Activated T-helper 2 cell treated with anti-CD3 and anti-CD28 coated beads, Interferon-gamma antibody, Interleukin-2, Interleukin-4, amounts not matched to agents 10 μg/mL and 5 μg/mL and 100 μg/mL, durations not matched to agents 14 hours and 24 hours and 36 hours (primary cell): ENCODE measurements at regions of chrX and their contacts with region 1.

Region 1: DNA sequence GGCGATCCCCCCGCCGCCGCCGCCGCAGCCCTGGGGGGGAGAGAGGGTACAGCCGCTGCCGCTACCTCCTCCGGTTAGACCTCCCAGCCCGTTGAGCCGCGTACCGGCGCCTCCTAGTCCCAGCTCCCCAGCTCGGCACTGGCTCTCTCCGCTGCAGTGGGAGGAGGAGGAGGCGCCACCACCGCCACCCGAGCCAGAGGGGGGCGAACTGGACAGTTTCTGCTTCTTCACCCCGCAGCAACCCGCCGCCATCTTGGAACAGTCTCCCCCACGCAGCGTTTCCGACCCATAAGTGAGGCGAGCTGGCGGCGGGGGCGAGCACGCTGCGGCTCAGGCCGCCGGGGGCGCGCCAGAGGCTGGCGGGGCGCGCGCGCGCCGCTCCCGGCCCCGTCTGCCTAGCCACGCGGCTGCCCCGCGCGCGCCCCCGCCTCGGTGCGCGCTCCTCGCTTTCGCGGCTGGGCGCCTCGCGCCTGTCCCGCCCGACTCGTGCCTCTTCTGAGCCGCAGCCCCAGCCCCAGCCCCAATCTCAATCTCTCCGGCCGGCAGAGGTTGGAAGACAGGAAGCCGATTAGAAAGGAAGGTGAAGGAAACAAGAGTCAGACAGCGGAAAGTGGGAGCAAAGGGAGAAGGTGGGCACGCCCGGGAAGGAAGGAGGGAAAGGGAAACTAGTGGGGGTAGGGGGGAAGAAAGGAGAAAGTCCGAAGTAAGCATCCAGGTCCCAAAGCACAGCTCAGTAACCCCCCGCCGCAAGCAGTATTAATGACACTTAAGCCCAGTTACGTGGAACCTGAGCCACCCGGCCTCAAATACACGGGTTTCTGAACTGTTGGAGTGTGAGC is at the start of gene AMMECR1:
- DNase-seq: peak; percentile 71
- H3K4me3 Mint-ChIP-seq: peak within 1 kb of the TSS; percentile 86
- H3K27ac Mint-ChIP-seq: peak within 1 kb of the TSS; percentile 83
- H3K4me1 Mint-ChIP-seq: peaks cover 14% of the 10 kb centered on the region
- H3K27me3 Mint-ChIP-seq: peaks cover 4% of the 10 kb centered on the region
- total RNA-seq, gene AMMECR1: 10.6 and 12.3 TPM in 2 replicates

Region 2: DNA sequence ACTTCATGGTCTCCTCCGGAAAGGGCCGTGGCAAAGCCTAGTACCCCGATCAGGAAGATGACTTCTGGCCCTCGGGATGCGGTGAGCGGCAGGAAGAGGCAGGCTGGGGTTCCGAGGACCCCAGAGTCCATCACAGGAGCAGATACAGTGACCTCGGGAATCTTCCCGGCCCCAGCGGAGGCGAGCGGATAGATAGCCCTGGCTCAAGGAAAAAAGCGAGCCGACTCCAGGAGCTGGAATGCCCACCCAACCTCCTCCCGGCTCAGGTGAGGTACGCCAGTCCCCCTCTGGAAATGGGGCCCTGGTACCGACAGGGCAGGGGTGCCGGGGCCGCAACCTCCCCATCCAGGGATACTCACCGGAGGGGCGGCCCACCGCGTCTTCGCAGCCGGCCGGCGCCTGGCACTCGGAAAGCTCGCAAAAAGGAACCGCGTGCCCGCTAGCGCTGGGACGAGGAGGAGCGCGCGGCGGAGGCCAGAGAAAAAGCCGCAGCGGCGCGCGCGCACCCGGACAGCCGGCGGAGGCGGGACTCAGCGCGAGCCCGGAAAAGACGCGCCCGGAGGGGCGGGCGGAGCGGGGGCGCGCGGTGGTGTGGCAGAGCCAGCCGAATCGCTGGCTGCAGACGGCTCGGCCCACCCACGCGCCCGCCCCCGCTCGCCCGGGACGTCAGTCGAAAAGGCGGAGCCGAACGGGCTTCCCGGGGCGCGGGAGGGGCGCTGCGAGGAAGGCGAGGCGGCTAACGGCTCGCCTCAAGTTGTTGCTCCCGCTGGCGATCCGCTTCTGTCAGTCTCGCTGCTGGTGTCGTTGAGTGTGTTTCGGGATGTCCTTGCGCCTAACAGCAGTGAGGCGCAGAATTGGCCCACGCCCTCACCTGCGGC is 585.0 kb before region 1 on chrX and contains the start of gene ACSL4:
- intact Hi-C with region 1: loop called (anchors 10 kb)
- DNase-seq: peak; percentile 78
- H3K4me3 Mint-ChIP-seq: peak within 1 kb of the TSS; percentile 93
- H3K27ac Mint-ChIP-seq: peak within 1 kb of the TSS; percentile 95
- H3K4me1 Mint-ChIP-seq: peaks cover 29% of the 10 kb centered on the region
- H3K27me3 Mint-ChIP-seq: no peaks in the 10 kb centered on the region
- total RNA-seq, gene ACSL4: 101 and 102 TPM in 2 replicates

Region 3: DNA sequence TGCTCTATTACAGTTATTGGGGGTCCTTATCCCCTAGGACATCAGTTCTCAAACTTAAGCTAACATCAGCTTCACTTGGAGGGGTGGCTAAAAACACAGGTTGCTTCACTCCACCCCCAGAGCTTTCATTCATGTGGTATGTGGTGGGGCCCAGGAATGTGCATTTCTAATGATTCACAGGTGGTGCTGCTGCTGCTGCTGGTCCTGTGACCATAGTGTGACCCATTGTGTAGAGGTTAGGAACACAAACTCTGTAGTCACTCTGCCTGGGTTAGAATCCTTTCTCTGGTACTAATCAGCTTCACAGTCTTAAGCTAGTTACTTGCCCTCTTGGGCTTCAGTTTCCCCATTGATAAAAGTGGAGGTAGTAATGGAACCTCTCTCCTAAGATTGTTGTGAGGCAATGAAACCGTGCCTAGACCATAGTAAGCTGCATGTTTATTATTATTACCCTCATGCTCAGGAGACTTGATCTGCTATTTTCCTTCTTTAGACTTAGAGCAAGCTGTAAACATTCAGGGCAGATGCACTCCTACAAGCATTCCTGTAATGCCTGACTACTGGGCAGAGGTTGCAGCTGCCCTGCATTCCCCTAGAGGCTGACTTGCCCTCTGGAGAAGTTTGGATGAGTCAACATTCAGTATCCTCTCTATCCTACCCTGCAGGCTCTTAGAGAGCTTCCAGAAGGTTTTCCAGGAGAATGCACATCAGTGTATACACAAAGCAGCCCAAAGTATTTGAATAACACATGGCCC is 490.9 kb before region 1 on chrX:
- intact Hi-C with region 1: no loop called
- DNase-seq: no peak
- H3K4me3 Mint-ChIP-seq: no peak overlapping the region
- H3K27ac Mint-ChIP-seq: no peak overlapping the region
- H3K4me1 Mint-ChIP-seq: peaks cover 9% of the 10 kb centered on the region
- H3K27me3 Mint-ChIP-seq: no peaks in the 10 kb centered on the region

Region 4: DNA sequence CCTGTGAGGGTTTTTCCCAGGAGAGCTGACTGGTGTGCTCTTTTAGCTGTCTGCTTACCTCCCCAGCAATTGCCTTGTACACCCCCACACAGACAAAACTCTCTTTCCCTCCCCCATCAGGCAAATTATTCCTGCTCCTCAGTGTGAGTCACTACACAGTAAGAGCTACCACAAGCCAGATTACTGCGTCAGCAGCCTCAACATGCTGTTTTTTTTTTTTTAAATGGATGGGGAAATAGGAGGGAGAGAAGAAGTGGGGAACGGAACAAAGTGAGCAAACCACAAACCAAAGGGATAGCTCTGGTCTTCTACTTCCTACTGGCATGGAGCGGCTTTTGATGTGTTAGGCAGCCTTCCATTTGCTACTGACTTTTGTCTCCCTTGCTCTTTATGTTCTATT is 477.5 kb before region 1 on chrX:
- intact Hi-C with region 1: loop called (anchors 10 kb)
- DNase-seq: no peak
- H3K4me3 Mint-ChIP-seq: no peak overlapping the region
- H3K27ac Mint-ChIP-seq: no peak overlapping the region
- H3K4me1 Mint-ChIP-seq: peaks cover 26% of the 10 kb centered on the region
- H3K27me3 Mint-ChIP-seq: no peaks in the 10 kb centered on the region

Region 5: DNA sequence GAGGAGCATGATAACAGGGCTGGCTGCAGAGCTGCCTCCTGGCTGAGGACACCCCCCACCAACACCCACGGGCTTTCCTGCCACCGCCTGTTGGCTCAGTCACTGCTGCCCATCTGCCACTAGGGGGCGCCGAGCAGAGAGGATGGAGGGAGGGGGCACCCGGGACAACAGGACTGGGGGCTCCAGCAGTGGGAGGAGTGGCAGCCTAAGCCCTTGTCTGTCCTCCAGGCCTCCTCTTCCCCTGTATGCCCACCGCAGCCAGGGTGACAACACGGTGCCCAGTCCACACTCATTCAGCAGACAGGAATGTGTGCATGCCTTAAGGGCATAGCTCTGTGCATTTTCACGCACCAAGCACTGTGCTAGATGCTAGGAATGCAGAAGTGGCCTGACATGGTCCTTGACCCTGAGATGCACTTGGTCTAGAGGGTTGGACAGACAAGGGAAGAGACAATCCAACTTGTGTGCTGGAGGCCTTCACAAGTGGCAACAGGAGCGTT is 150.0 kb before region 1 on chrX:
- intact Hi-C with region 1: loop called (anchors 5 kb)
- DNase-seq: peak; percentile 11
- H3K4me3 Mint-ChIP-seq: no peak overlapping the region
- H3K27ac Mint-ChIP-seq: no peak overlapping the region
- H3K4me1 Mint-ChIP-seq: peaks cover 4% of the 10 kb centered on the region
- H3K27me3 Mint-ChIP-seq: no peaks in the 10 kb centered on the region

Region 6: DNA sequence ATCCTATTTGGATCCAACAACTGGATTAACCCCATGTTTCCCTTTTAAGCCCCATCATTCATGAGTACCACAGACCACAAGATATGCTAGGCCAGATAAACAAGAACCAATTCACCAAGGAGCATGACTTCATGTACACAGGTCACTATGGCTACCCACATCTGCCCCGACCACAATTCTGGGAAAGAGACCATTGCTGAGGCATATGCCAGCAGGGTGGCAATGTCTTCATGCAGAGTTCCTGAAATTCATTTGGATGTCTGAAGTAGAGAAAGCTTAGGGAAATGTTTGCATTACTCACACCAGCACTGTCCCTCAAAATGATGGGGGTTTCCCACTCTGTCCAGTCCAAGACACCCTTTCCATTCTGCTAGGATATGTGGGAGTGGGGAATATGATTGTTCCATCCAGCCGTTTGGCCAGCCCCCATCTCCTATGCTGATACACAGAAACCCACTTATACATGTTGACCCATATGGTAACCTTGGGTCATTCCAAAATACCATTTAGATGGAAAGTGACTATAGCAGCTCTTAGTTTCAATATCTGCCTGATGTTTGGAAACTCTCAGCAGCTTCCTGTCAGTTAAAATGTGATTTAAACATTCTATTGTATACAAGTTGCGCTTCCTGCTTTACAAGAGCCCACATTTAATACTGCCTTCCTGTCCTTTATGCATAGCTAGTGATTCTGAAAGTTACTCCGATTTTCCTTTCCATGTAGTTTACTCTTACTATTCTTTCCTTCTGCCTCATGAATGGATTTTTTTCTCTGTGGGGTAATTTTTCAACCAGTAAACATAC is 129.1 kb before region 1 on chrX:
- intact Hi-C with region 1: loop called (anchors 5 kb)
- DNase-seq: no peak
- H3K4me3 Mint-ChIP-seq: no peak overlapping the region
- H3K27ac Mint-ChIP-seq: peak overlapping the region; percentile 66
- H3K4me1 Mint-ChIP-seq: peaks cover 27% of the 10 kb centered on the region
- H3K27me3 Mint-ChIP-seq: no peaks in the 10 kb centered on the region

Region 7: GRCh38 chrX:110204986-110205385 is 113.1 kb before region 1 on chrX:
- intact Hi-C with region 1: loop called (anchors 5 kb)
- DNase-seq: no peak
- H3K4me3 Mint-ChIP-seq: no peak overlapping the region
- H3K27ac Mint-ChIP-seq: no peak overlapping the region
- H3K4me1 Mint-ChIP-seq: peaks cover 6% of the 10 kb centered on the region
- H3K27me3 Mint-ChIP-seq: no peaks in the 10 kb centered on the region

Region 8: GRCh38 chrX:110276778-110277177 is 41.3 kb before region 1 on chrX:
- intact Hi-C with region 1: no loop called
- DNase-seq: no peak
- H3K4me3 Mint-ChIP-seq: no peak overlapping the region
- H3K27ac Mint-ChIP-seq: no peak overlapping the region
- H3K4me1 Mint-ChIP-seq: peaks cover 3% of the 10 kb centered on the region
- H3K27me3 Mint-ChIP-seq: no peaks in the 10 kb centered on the region

Region 9: DNA sequence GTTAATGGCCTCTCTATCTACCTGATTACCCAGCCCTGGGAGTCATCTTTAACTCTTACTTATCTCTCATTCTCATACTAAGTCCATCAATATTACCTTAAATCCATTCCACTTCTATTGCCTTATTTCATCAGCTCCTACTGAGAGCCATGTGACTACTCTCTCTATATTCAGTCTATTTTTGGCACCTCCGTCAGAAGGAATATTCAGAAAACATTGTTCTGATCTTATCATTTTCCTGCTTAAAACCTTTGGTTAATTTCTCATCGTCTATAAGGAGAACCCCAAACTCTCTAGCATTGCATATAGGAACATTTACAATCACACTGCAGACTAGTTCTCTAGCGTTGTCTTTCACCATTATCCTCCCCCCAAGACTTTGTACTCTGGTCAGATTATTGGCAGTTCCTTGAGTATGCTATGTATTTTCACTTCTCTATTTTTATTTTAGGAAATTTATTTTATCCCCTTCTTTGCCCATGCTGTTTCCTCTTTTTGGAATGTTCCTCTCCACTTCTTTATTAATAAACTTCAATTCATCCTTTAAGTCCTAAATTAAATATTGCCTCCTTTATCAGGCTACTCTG is 13.5 kb after region 1 on chrX:
- intact Hi-C with region 1: no loop called
- DNase-seq: no peak
- H3K4me3 Mint-ChIP-seq: no peak overlapping the region
- H3K27ac Mint-ChIP-seq: no peak overlapping the region
- H3K4me1 Mint-ChIP-seq: no peaks in the 10 kb centered on the region
- H3K27me3 Mint-ChIP-seq: no peaks in the 10 kb centered on the region

Region 10: DNA sequence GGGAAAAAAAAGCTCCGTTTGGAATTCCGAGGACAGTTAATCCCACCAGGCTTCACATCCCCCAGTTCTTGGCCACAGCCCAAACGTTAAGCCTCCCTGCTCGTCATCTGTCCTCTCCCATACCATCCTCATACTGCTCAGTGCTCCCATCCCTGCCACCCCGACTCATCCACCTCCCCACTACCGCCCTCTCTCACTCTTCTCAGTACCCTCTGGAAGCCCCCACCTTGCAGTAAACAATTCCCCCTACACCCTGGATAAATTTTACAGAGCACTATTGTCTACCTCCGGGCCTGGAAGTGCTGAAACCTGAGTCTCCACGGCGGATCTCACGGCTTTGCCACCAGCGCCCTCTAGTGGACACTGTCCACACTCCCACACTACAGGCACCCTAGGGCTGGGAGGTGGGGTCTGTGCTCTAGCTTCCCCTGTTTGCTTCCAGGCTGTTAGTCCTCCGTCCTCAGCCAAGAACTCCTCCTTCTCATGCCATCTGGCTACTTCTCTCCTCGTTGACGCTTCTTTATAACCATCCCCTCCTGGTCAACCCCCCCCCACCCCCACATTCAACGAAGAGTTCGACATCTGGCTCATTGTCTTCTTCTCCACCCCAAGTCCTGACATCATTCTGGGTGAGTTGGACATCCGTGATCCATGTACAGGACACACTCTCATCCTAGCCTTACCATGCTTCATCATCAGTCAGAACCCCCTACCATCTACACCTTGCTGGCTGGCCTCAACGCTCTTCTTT is 95.1 kb after region 1 on chrX:
- intact Hi-C with region 1: loop called (anchors 5 kb)
- DNase-seq: peak; percentile 51
- H3K4me3 Mint-ChIP-seq: no peak overlapping the region
- H3K27ac Mint-ChIP-seq: no peak overlapping the region
- H3K4me1 Mint-ChIP-seq: peaks cover 7% of the 10 kb centered on the region
- H3K27me3 Mint-ChIP-seq: peaks cover 5% of the 10 kb centered on the region